ENCODE measurements at regions of chr3 and their contacts with region 1.

Region 1: GRCh38 chr3:193917158-193917557 is 218.8 kb upstream of the HES1 start:
- DNase-seq: no peak
- H3K4me3 ChIP-seq: no peak overlapping the region
- H3K4me3 Mint-ChIP-seq: no peak overlapping the region
- H3K27ac Mint-ChIP-seq: peak overlapping the region; percentile 65
- H3K4me1 ChIP-seq: peaks cover 55% of the 10 kb centered on the region
- H3K4me1 Mint-ChIP-seq: peaks cover 46% of the 10 kb centered on the region
- H3K27me3 ChIP-seq: no peaks in the 10 kb centered on the region
- H3K27me3 Mint-ChIP-seq: no peaks in the 10 kb centered on the region
- CTCF ChIP-seq: no peak

Region 2: GRCh38 chr3:193743702-193744047 is 173.5 kb before region 1 on chr3:
- CTCF ChIA-PET with region 1: no interaction called
- POLR2A ChIA-PET with region 1: no interaction called
- intact Hi-C with region 1: loop called (anchors 1 kb)
- DNase-seq: peak in 1 of 2 experiments; percentile 57
- H3K4me3 ChIP-seq: peak overlapping the region; percentile 35
- H3K4me3 Mint-ChIP-seq: peak overlapping the region; percentile 77
- H3K27ac Mint-ChIP-seq: peak overlapping the region; percentile 87
- H3K4me1 ChIP-seq: peaks cover 30% of the 10 kb centered on the region
- H3K4me1 Mint-ChIP-seq: peaks cover 24% of the 10 kb centered on the region
- H3K27me3 ChIP-seq: no peaks in the 10 kb centered on the region
- H3K27me3 Mint-ChIP-seq: no peaks in the 10 kb centered on the region
- CTCF ChIP-seq: no peak

Region 3: DNA sequence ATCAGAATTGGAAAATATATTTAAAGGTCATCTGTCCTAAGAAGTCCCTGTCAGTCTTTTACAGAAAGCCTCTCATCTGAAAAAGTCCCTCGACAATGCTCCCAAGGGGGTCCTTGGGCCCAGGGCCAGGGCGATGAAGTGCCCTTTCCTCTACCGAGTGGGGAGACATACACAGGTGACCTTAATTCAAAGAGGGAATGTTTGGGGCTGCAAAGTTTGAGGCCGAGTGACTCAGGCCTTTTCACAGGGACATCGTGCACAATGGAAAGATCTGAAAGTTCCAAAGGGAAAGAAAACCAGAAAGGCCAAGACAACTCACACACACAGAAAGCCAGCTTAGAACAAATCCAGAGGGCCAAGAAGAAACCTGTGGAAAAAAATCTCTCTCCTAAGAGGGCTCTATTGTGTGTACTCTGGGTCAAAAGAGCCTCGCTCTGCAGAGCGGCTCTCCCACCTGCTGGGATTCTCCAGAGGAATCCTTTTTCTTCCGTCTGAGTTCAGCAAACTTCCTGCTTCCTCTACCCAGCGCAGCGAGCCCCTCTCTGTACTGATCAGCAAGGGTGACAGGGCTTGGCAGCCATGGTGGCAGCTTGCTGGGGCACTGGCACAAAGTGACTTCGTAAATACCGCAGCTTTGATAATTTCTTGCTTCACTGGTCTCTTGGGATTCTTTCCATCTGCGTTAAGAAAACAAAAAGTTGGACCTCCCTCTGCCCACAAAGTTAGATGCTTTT is 65.0 kb before region 1 on chr3:
- CTCF ChIA-PET with region 1: no interaction called
- POLR2A ChIA-PET with region 1: no interaction called
- intact Hi-C with region 1: loop called (anchors 1 kb)
- DNase-seq: no peak
- H3K4me3 ChIP-seq: no peak overlapping the region
- H3K4me3 Mint-ChIP-seq: peak overlapping the region; percentile 20
- H3K27ac Mint-ChIP-seq: peak overlapping the region; percentile 84
- H3K4me1 ChIP-seq: peaks cover 56% of the 10 kb centered on the region
- H3K4me1 Mint-ChIP-seq: peaks cover 40% of the 10 kb centered on the region
- H3K27me3 ChIP-seq: no peaks in the 10 kb centered on the region
- H3K27me3 Mint-ChIP-seq: no peaks in the 10 kb centered on the region
- CTCF ChIP-seq: no peak

Region 4: GRCh38 chr3:194070634-194071409 is 153.7 kb after region 1 on chr3:
- CTCF ChIA-PET with region 1: interaction called, 3 read pairs
- POLR2A ChIA-PET with region 1: no interaction called
- intact Hi-C with region 1: loop called (anchors 1 kb)
- DNase-seq: peak; percentile 87 to 89
- H3K4me3 ChIP-seq: peak overlapping the region; percentile 52
- H3K4me3 Mint-ChIP-seq: peak overlapping the region; percentile 88
- H3K27ac Mint-ChIP-seq: peak overlapping the region; percentile 94
- H3K4me1 ChIP-seq: peaks cover 44% of the 10 kb centered on the region
- H3K4me1 Mint-ChIP-seq: peaks cover 33% of the 10 kb centered on the region
- H3K27me3 ChIP-seq: no peaks in the 10 kb centered on the region
- H3K27me3 Mint-ChIP-seq: no peaks in the 10 kb centered on the region
- CTCF ChIP-seq: no peak

Region 5: GRCh38 chr3:194121891-194122631 is 204.9 kb after region 1 on chr3:
- CTCF ChIA-PET with region 1: interaction called, 4 read pairs
- POLR2A ChIA-PET with region 1: no interaction called
- intact Hi-C with region 1: loop called (anchors 1 kb)
- DNase-seq: peak; percentile 70 to 72
- H3K4me3 ChIP-seq: no peak overlapping the region
- H3K4me3 Mint-ChIP-seq: peak overlapping the region; percentile 56
- H3K27ac Mint-ChIP-seq: peak overlapping the region; percentile 89
- H3K4me1 ChIP-seq: peaks cover 82% of the 10 kb centered on the region
- H3K4me1 Mint-ChIP-seq: peaks cover 72% of the 10 kb centered on the region
- H3K27me3 ChIP-seq: no peaks in the 10 kb centered on the region
- H3K27me3 Mint-ChIP-seq: no peaks in the 10 kb centered on the region
- CTCF ChIP-seq: no peak

Measured in Caco-2 (cell line).